ENCODE measurements at regions of chr17 and their contacts with region 1.

Region 1: DNA sequence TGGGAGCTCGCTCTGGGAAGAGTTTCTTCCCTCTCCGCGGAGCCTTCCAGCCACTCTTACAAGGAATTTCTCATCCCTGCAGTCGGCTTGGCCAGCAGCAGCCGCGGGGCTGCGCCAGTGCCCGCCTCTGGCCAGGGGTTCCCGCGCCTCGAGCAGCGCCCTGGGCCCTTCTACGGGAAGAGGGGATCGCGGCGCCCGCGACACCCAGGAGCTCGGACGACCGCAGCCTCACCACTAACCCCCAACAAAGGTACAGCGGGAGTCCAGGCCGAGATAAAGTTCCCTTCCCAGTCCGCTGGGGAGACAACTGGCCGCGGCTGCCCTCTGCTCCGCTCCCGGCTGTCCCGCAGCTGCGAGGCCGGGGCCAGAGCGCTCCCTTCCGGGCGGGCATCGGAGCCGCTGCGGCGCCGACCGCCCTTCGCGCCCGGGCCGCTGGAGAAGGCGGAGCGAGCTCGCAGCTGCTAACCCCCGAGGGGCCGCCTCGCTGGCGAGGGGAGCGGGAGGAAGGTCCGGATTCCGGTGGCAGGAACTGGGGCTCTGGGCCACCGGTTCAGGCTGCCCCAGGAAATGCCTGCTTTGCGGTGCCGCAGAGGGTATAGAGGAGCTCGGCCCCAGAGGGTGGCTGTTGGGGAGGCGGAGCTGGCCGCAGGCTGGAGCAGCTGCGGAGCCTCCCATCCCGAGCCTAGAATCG is 3.6 kb upstream of the HS3ST3B1 start:
- DNase-seq: no peak
- ATAC-seq: no peak

Region 2: GRCh38 chr17:13594762-13595598 is 702.3 kb before region 1 on chr17:
- intact Hi-C with region 1: loop called (anchors 10 kb)
- DNase-seq: peak; percentile 83
- ATAC-seq: peak; percentile 78

Region 3: DNA sequence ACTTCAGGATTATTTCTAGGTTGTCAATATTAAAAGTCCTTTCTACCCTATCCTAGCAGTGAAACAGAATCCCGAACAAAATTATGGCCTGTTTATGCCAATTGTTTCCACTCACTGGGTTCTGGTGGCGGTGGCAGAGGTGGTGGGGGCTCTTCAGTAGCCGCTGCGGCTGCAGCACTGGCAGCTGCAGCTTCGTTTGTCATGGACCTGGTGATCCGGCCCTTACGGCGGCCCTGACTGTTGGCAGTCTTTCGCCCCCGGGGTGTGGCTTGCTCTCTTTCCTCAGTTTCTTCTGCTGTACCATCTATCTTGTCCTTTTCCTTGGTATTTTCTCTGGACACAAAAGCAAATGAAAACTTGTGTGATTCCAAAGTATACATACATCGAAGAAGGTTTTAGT is 1823.6 kb after region 1 on chr17:
- intact Hi-C with region 1: no loop called
- DNase-seq: no peak
- ATAC-seq: no peak